Activated CD8-positive, alpha-beta T cell treated with anti-CD3 and anti-CD28 coated beads for 36 hours (primary cell): ENCODE measurements at regions of chr12 and their contacts with region 1.

Region 1: DNA sequence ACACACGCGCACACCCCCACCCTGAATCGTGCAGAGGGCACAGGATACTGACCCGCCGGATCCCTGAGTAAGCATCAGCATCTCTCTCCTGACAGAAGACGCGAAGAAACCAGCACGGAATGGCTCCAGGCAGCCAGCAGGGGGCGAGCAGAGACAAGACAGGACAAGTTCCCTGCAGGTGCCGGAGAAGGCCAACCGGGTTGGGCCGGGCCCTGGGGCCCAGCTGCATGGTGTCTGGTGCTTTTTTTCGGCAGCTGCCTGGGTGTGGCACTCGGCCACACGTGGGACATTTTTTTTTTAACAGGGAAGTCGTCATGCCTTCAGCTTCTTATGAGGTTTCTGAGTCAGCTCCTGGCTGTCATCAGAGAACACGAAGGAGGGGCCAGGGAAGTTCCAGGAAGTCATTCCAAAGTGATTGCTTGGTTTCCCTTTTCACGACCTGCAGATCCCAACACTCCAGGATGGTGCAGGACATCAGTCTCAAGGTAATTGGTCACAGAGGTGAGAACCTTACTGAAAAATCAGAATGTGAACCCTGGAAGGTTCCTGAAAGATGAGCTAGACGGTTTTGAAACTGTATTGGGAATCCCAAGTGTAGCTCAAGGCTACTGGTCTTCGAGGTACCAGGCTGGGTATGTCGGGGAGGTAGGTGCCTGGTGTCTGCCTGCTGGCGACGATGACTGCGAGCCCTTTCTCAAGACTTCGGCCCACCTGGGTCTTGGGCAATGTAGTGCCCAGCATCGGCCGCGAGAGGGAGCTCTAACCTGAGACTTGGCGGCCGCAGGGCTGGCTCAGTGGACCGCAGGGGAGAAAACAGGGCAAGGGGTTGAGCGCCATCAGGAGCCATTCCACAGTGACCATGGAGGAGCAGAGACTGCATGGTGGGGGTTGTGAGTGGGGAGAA is 190.8 kb upstream of the PRMT8 start:
- DNase-seq: peak; percentile 89
- ATAC-seq: peak; percentile 86
- H3K4me3 Mint-ChIP-seq: peak overlapping the region; percentile 28
- H3K27ac Mint-ChIP-seq: peak overlapping the region; percentile 62
- H3K4me1 Mint-ChIP-seq: peaks cover 11% of the 10 kb centered on the region
- H3K27me3 Mint-ChIP-seq: peaks cover 19% of the 10 kb centered on the region
- CTCF ChIP-seq: peak; percentile 86

Region 2: GRCh38 chr12:3117144-3117581 is 183.0 kb before region 1 on chr12:
- CTCF ChIA-PET with region 1: no interaction called
- POLR2A ChIA-PET with region 1: no interaction called
- intact Hi-C with region 1: no loop called
- DNase-seq: no peak
- ATAC-seq: no peak
- H3K4me3 Mint-ChIP-seq: no peak overlapping the region
- H3K27ac Mint-ChIP-seq: no peak overlapping the region
- H3K4me1 Mint-ChIP-seq: peaks cover 13% of the 10 kb centered on the region
- H3K27me3 Mint-ChIP-seq: peaks cover 30% of the 10 kb centered on the region
- CTCF ChIP-seq: no peak

Region 3: DNA sequence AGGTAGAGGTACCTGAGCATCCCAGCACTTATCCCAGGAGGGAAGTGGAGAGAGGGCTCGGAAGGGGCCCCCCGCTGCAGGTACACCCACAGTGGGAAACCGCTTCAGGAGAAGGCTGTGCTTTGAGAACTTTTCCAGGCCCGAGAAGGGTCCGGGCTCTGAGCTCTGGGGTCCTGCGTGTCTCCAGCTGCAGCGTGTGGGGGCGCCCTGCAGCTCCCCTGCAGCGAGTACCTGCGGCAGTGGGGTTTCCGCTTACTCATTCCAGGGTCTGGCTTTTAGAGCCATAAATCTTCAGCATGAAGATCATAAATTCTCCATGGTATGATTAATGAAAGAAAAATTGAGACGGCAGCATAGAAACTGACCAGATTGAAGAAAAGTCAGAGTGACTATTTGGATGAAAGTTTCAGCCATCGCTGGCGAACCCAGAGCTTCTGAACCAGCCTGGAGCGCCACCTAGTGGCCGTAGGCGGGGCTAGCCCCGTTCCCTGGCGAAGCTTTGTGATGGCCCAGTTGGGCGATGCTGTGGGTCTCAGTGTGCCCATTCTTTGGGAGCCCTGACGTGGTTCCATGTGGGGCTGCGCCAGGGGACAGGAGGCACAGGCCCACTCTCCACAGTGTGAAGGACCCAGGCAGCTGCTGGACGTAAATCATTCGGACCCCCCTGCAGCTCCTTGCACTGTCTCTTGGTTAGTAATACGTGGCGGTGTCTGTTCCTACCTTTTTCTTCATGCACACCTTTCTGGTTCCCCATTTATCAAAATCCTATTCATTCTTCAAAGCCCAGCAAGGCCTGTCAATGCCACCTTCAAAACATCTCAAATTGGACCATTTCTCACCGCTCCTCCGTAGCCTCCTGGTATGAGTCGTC is 24.8 kb before region 1 on chr12:
- CTCF ChIA-PET with region 1: interaction called, 22 read pairs
- POLR2A ChIA-PET with region 1: no interaction called
- intact Hi-C with region 1: no loop called
- DNase-seq: peak; percentile 81
- ATAC-seq: peak; percentile 85
- H3K4me3 Mint-ChIP-seq: no peak overlapping the region
- H3K27ac Mint-ChIP-seq: no peak overlapping the region
- H3K4me1 Mint-ChIP-seq: peaks cover 3% of the 10 kb centered on the region
- H3K27me3 Mint-ChIP-seq: peaks cover 5% of the 10 kb centered on the region
- CTCF ChIP-seq: peak; percentile 95

Region 4: DNA sequence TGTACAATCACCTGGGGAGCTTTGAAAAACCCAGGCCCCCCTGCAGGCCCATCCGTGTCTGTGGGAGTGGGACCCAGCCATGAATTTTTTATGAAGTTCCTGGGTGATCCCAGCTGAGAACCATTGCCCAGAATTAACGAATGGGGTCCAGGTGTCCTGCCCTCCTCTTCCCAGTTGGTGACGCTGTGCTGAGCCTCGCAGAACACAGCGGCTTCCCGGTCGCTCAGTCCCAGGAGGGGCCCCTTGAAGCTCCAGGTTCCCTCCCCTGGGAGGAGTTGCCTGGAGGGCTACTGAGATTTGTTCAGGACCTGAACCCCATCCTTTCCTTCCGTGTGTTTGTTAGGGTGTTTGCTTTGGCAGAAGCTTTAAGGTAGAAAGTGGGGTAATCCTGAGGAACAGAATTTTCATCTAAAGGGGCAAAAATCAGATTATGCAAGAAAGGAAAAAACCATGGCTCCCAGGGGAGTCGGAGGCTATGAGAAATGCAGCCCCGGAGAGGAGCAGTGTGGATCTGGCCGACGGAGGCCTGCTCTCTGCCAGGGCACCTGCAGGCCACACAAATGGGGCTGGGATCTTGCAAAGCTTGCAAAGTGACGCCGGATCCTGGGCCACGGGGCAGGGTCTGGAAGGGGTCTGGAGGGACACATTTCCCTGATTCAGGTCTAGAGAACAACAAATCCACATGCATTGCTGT is 26.1 kb after region 1 on chr12:
- CTCF ChIA-PET with region 1: interaction called, 15 read pairs
- POLR2A ChIA-PET with region 1: no interaction called
- intact Hi-C with region 1: no loop called
- DNase-seq: no peak
- ATAC-seq: no peak
- H3K4me3 Mint-ChIP-seq: no peak overlapping the region
- H3K27ac Mint-ChIP-seq: no peak overlapping the region
- H3K4me1 Mint-ChIP-seq: no peaks in the 10 kb centered on the region
- H3K27me3 Mint-ChIP-seq: no peaks in the 10 kb centered on the region
- CTCF ChIP-seq: no peak

Region 5: DNA sequence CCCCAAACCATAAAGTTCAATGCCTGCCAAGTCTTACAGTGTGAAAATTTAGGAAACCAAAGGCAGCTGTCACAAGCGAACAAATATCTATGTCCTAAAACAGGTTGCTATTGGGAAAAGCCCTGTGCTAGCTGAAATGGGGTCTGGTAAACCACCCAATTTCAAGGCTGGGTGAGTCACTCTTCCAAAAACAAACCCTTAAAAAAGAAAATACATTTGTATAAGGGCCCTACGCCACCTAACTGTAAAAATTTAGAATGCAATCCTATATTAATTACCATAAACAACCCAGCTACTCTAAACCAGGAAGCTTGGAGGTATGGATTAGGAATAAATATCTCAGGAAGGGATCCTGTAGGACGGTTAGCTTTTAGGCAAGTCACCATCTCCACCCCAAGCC is 222.9 kb after region 1 on chr12:
- CTCF ChIA-PET with region 1: interaction called, 10 read pairs
- POLR2A ChIA-PET with region 1: no interaction called
- intact Hi-C with region 1: no loop called
- DNase-seq: no peak
- ATAC-seq: no peak
- H3K4me3 Mint-ChIP-seq: no peak overlapping the region
- H3K27ac Mint-ChIP-seq: no peak overlapping the region
- H3K4me1 Mint-ChIP-seq: no peaks in the 10 kb centered on the region
- H3K27me3 Mint-ChIP-seq: no peaks in the 10 kb centered on the region
- CTCF ChIP-seq: no peak

Region 6: GRCh38 chr12:3752741-3753486 is 452.7 kb after region 1 on chr12 and contains the start of gene CRACR2A:
- CTCF ChIA-PET with region 1: interaction called, 13 read pairs
- POLR2A ChIA-PET with region 1: no interaction called
- intact Hi-C with region 1: no loop called
- DNase-seq: peak; percentile 90
- ATAC-seq: peak; percentile 86
- H3K4me3 Mint-ChIP-seq: peak within 1 kb of the TSS; percentile 80
- H3K27ac Mint-ChIP-seq: peak within 1 kb of the TSS; percentile 90
- H3K4me1 Mint-ChIP-seq: peaks cover 46% of the 10 kb centered on the region
- H3K27me3 Mint-ChIP-seq: no peaks in the 10 kb centered on the region
- CTCF ChIP-seq: peak; percentile 79
- total RNA-seq, gene CRACR2A: 21.2 to 24.7 TPM

Region 7: DNA sequence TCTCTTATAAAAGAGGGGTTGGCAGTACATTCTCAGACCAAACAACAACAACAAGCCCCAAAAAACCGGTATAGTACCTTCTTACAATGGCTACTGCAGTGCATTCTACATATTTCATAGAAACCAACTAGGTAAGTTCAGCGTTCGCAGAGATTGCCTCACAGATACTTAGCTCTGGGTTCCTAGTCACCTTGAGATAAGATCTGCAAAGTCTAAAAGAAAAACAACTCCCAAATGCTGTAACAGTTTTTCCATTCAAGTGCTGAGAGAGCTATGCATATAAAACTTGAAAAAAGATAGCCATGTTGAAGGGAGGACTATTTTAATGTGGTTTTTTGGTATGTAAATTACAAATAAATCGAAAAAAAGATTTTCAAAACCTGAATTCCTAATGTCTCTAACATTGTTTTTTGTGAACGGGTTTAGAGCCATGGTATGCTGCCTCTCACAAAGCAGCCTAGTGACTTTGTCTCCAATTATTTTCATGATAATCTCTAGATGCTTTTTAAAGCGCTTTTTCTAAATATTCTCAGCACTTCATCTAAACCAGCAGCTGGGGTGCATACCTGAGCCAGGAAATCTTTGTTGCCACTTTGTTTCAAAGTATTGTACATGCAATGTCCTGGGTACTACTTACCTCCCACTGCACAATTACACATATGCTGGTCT is 509.3 kb after region 1 on chr12:
- CTCF ChIA-PET with region 1: interaction called, 57 read pairs
- POLR2A ChIA-PET with region 1: interaction called, 3 read pairs
- intact Hi-C with region 1: loop called (anchors 5 kb)
- DNase-seq: no peak
- ATAC-seq: no peak
- H3K4me3 Mint-ChIP-seq: no peak overlapping the region
- H3K27ac Mint-ChIP-seq: no peak overlapping the region
- H3K4me1 Mint-ChIP-seq: peaks cover 14% of the 10 kb centered on the region
- H3K27me3 Mint-ChIP-seq: no peaks in the 10 kb centered on the region
- CTCF ChIP-seq: no peak